T-cell (primary cell): ENCODE measurements at regions of chr14 and their contacts with region 1.

Region 1: DNA sequence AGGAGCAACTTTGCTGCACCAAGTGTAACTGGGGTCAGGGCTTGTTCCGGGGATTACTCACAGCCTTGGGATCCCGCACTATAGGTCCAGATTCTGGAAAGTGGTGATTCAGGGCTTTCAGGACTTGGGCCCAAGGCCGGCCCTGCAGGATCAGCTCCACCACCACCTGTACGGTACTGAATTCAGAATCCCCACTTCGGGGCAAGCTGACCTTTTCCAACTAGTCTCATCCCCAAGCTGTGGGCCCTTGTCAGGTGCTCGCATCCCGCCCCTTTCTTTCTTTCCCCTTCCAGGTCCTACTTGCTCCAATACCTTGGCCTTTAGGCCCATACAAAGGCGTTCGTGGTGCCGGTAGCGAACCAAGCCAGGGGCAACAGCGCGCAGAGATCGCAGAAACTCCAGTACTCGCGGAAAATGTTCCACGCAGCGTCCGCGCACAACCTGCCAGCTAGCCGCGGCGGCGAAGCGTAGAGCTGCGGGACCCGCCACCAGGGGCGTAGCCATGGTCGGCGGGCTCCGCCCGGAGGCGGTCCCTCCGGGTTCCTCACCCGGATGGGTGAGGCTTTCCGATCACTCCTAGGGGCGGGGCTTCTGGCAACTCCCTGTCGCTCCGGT is 487 bp downstream of the TINF2 start:
- DNase-seq: peak in 34 of 35 experiments; percentile 85 to 96 (median 92)
- ATAC-seq: peak; percentile 84 to 90 (median 86)
- H3K4me3 ChIP-seq: peak overlapping the region; percentile 81 to 96
- H3K4me3 Mint-ChIP-seq: peak overlapping the region; percentile 83 to 98 (median 98)
- H3K27ac ChIP-seq: peak overlapping the region; percentile 97
- H3K27ac Mint-ChIP-seq: peak overlapping the region; percentile 100
- H3K4me1 ChIP-seq: peaks cover 26 to 56% of the 10 kb centered on the region in 2 experiments
- H3K4me1 Mint-ChIP-seq: peaks cover 66 to 73% (median 69%) of the 10 kb centered on the region in 3 donors
- H3K27me3 ChIP-seq: no peaks in the 10 kb centered on the region
- H3K27me3 Mint-ChIP-seq: no peaks in the 10 kb centered on the region

Region 2: GRCh38 chr14:23929822-23930294 is 312.1 kb before region 1 on chr14:
- CTCF ChIA-PET with region 1: no interaction called
- POLR2A ChIA-PET with region 1: no interaction called
- DNase-seq: peak; percentile 41 to 90 (median 75)
- ATAC-seq: peak; percentile 81 to 94 (median 88)
- H3K4me3 ChIP-seq: no peak overlapping the region
- H3K4me3 Mint-ChIP-seq: no peak overlapping the region
- H3K27ac ChIP-seq: no peak overlapping the region
- H3K27ac Mint-ChIP-seq: no peak overlapping the region
- H3K4me1 ChIP-seq: no peaks in the 10 kb centered on the region
- H3K4me1 Mint-ChIP-seq: peaks cover 0 to 2% (median 0%) of the 10 kb centered on the region in 3 donors
- H3K27me3 ChIP-seq: peaks cover 0 to 6% of the 10 kb centered on the region in 2 experiments
- H3K27me3 Mint-ChIP-seq: peaks cover 5 to 10% of the 10 kb centered on the region in 2 donors

Region 3: DNA sequence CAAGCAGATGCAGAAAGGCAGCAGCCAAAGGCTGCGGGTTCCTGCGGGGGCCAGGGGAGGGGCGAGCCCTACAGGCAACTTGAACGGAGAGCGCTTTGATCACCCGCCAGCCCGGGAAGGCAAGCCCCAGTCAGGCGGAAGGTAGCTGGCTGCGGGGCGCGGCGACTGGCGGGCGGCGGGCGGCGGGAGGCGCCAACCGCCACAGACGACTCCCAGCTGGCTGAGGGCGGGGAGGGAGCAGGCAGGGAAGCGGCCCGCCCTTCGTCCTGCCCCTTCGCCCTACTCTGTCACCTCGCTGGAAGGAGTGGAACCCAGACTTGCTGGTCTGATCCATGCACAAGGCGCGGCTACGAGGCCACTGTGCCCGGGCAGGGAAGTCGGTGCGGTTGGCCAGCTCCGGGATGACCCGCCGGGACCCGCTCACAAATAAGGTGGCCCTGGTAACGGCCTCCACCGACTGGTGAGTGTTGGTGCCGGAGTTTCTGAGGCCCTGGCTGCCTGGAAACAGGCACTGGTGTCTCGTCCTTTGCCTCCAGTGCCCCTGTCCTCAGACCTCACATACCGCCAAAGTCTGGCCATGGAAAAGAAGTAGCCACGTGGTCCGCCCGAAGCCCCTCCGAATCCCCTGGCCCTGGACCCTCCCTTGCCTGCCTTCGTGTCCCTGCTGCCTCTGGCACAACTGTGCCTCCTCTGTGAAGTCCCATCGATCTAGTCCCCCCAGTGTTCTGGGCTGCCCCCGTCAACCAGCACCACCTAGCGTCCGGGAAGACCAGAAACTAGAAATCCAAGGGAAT is 205.6 kb before region 1 on chr14:
- CTCF ChIA-PET with region 1: no interaction called
- POLR2A ChIA-PET with region 1: no interaction called
- DNase-seq: peak; percentile 41 to 76 (median 57)
- ATAC-seq: peak; percentile 85 to 86 (median 86)
- H3K4me3 ChIP-seq: peak overlapping the region; percentile 69 to 70
- H3K4me3 Mint-ChIP-seq: peak overlapping the region; percentile 88 to 94 (median 89)
- H3K27ac ChIP-seq: peak overlapping the region; percentile 61
- H3K27ac Mint-ChIP-seq: peak overlapping the region; percentile 89
- H3K4me1 ChIP-seq: peaks cover 0 to 11% of the 10 kb centered on the region in 2 experiments
- H3K4me1 Mint-ChIP-seq: peaks cover 10 to 20% (median 10%) of the 10 kb centered on the region in 3 donors
- H3K27me3 ChIP-seq: no peaks in the 10 kb centered on the region
- H3K27me3 Mint-ChIP-seq: no peaks in the 10 kb centered on the region

Region 4: GRCh38 chr14:24141097-24141880 is 100.6 kb before region 1 on chr14 and contains the start of gene EMC9:
- CTCF ChIA-PET with region 1: interaction called in 1 of 2 experiments, 3 read pairs
- POLR2A ChIA-PET with region 1: interaction called in 1 of 2 experiments, 15 read pairs
- DNase-seq: peak; percentile 98 to 100 (median 99)
- ATAC-seq: peak; percentile 90 to 93 (median 90)
- H3K4me3 ChIP-seq: peak within 1 kb of the TSS; percentile 69 to 90
- H3K4me3 Mint-ChIP-seq: peak within 1 kb of the TSS; percentile 85 to 97 (median 88)
- H3K27ac ChIP-seq: peak within 1 kb of the TSS; percentile 63
- H3K27ac Mint-ChIP-seq: peak within 1 kb of the TSS; percentile 90 to 92
- H3K4me1 ChIP-seq: peaks cover 22 to 72% of the 10 kb centered on the region in 2 experiments
- H3K4me1 Mint-ChIP-seq: peaks cover 80 to 84% (median 82%) of the 10 kb centered on the region in 3 donors
- H3K27me3 ChIP-seq: no peaks in the 10 kb centered on the region
- H3K27me3 Mint-ChIP-seq: no peaks in the 10 kb centered on the region
- total RNA-seq, gene EMC9: 9.3 to 29.8 (median 20.8) TPM

Region 5: GRCh38 chr14:24215495-24216344 is 26.2 kb before region 1 on chr14 and contains the start of gene MDP1:
- CTCF ChIA-PET with region 1: interaction called, 13 to 26 read pairs
- POLR2A ChIA-PET with region 1: interaction called in 1 of 2 experiments, 22 read pairs
- DNase-seq: peak; percentile 73 to 96 (median 85)
- ATAC-seq: peak; percentile 74 to 82 (median 80)
- H3K4me3 ChIP-seq: peak within 1 kb of the TSS; percentile 67 to 89
- H3K4me3 Mint-ChIP-seq: peak within 1 kb of the TSS; percentile 86 to 93 (median 92)
- H3K27ac ChIP-seq: peak within 1 kb of the TSS; percentile 86
- H3K27ac Mint-ChIP-seq: peak within 1 kb of the TSS; percentile 95 to 97
- H3K4me1 ChIP-seq: peaks cover 21 to 45% of the 10 kb centered on the region in 2 experiments
- H3K4me1 Mint-ChIP-seq: peaks cover 42 to 54% (median 50%) of the 10 kb centered on the region in 3 donors
- H3K27me3 ChIP-seq: no peaks in the 10 kb centered on the region
- H3K27me3 Mint-ChIP-seq: no peaks in the 10 kb centered on the region
- total RNA-seq, gene MDP1: 7.2 to 17.5 (median 12.1) TPM

Region 6: GRCh38 chr14:24299255-24300195 is 57.6 kb after region 1 on chr14 and contains the starts of genes DHRS1 and NOP9:
- CTCF ChIA-PET with region 1: interaction called, 14 to 104 read pairs
- POLR2A ChIA-PET with region 1: interaction called, 3 to 17 read pairs
- DNase-seq: peak; percentile 70 to 96 (median 89)
- ATAC-seq: peak; percentile 86 to 92 (median 90)
- H3K4me3 ChIP-seq: peak within 1 kb of the TSS; percentile 70 to 82
- H3K4me3 Mint-ChIP-seq: peak within 1 kb of the TSS; percentile 92 to 95 (median 93)
- H3K27ac ChIP-seq: peak within 1 kb of the TSS; percentile 84
- H3K27ac Mint-ChIP-seq: peak within 1 kb of the TSS; percentile 95 to 97
- H3K4me1 ChIP-seq: peaks cover 23 to 32% of the 10 kb centered on the region in 2 experiments
- H3K4me1 Mint-ChIP-seq: peaks cover 45 to 60% (median 49%) of the 10 kb centered on the region in 3 donors
- H3K27me3 ChIP-seq: no peaks in the 10 kb centered on the region
- H3K27me3 Mint-ChIP-seq: no peaks in the 10 kb centered on the region
- total RNA-seq, gene DHRS1: 34.2 to 47.6 (median 39.1) TPM
- total RNA-seq, gene NOP9: 29.7 to 33.2 (median 30.8) TPM

Region 7: DNA sequence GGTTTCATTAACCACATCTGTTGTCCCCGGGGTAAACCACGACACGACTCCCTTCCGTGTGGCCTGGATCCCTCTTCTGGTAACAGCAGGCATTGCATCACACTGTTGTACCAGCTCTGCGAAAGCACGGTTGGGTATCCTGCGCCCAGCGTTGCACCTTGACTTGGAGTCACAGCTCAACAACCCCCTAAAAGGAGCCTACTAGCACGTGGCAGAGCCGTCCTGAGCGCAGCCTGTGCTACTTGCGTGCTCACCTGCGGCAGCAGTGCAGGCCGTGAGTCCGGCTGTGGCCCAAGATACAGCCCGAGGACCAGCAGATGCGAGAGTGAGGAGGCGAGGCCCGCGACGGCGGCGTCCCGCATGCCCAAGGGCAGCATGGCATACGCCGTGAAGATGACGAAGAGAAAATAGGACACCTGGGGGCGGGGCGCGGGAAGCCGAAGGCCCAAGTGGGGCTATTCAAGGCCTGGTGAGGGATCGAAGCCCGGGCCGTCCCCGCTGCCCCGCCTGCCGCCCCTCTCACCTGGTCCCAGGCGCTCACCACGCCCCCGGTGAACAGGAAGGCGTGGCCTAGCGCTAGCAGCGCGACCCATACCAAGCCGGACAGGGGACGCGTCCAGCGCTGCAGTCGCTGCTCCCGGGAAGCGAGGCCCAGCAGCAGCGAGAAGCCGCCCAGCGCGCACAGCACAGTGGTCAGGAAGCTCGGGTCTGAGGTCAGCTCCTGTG is 90.5 kb after region 1 on chr14:
- CTCF ChIA-PET with region 1: interaction called in 1 of 2 experiments, 24 read pairs
- POLR2A ChIA-PET with region 1: no interaction called
- DNase-seq: peak; percentile 69 to 95 (median 86)
- ATAC-seq: peak; percentile 81 to 88 (median 87)
- H3K4me3 ChIP-seq: peak overlapping the region; percentile 35 to 38
- H3K4me3 Mint-ChIP-seq: peak overlapping the region; percentile 77 to 84 (median 78)
- H3K27ac ChIP-seq: no peak overlapping the region
- H3K27ac Mint-ChIP-seq: peak overlapping the region; percentile 54 to 75
- H3K4me1 ChIP-seq: peaks cover 17 to 79% of the 10 kb centered on the region in 2 experiments
- H3K4me1 Mint-ChIP-seq: peaks cover 53 to 81% (median 56%) of the 10 kb centered on the region in 3 donors
- H3K27me3 ChIP-seq: peaks cover 8 to 46% of the 10 kb centered on the region in 2 experiments
- H3K27me3 Mint-ChIP-seq: peaks cover 18 to 29% of the 10 kb centered on the region in 2 donors